ENCODE measurements at regions of chr19 and their contacts with region 1.

Region 1: DNA sequence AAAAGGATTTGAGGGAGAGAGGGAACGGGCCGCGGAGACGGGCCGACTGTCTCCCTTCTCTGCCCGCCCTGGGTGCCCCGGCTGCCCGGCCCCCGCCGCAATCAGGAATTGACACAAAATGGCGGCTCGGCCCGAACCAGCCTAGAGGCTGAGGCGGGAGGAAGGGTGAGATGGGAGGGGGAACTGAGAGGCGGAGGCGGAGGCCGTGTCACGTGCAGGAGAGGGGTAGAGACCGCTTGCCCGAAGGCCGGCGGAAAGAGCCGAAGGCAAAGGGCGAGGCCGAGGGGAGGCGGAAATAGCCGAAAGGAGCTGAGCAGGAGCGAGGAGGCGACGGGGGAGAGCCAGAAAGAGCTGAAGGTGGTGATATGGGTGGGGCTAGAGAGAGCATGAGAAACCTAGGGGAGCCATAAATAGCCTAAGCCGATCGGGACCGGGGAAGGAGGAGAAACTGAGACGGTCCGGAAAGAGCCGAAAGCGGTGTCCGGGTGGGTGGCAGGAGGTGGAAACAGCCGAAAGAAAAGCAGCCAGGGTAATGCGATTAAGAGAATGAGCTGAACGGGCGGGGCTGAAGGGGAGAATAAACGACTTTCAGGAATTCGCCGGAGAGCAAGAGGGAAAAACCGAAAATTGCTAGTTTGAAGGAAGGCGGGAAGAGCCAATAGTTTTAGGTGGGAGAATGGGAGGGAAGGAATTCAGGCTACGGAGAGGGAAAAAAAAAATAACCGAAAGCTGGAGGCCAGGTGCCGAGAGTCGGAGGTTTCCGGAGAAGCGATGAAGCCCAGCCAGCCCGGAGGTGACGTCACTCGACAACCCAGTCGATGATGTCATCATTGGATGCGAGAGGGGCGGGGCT is at the start of gene ZC3H4:
- DNase-seq: peak; percentile 95

Region 2: DNA sequence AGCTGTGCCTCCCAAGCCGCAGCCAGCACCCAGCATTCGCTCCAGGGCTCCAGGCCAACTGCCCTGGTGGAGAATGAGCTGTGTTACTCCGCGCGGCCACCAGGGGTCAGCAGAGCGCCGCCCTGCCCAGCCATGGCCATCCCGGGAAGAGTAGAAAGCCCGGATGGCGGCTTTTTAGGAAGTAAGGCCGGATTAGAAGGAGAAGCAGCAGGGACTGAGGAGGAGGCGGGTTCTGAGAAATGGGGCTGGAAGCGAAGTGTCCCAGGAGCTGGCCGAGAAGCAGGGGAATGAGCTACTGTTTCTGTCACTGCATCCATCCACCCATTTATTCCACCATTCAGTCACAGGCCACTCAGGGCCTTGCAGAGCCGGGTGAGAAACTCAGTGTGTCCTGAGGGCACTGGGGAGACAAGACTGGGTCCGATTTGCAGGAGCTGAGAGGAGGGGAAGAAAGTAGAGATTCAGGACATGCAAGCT is 100.1 kb before region 1 on chr19:
- CTCF ChIA-PET with region 1: interaction called, 4 read pairs
- POLR2A ChIA-PET with region 1: interaction called, 12 read pairs
- DNase-seq: peak; percentile 89

Region 3: DNA sequence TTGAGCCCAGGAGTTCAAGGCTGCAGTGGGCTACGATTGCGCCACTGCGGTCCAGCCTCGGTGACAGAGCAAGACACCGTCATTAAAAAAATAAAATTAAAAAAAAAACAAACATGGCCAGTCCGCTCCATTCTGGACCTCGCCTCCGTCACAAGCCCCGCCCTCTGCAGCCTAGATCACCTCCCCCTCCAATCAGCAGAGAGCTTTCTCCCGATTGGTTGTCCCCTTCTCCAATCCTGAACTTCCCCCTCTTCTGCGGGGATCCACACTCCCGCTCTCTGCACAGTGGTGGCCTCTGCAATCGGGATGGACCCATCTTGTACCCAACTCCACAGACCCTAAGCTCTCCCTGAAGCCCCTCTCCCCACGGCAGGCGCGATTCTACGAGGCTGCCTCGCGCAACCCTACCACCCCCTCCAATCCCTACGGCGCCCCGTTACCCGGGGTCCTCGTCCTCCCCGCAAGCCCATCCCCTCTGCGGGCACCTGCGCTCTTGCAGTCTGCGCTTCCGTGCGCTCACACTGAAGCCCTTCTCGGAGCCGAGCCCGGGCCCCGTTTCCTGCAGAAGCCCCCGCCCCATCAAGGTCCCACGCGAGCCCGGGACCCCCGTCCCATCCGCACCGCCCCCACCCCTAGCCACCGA is 65.3 kb before region 1 on chr19:
- CTCF ChIA-PET with region 1: no interaction called
- POLR2A ChIA-PET with region 1: interaction called, 14 read pairs
- DNase-seq: peak; percentile 93

Region 4: DNA sequence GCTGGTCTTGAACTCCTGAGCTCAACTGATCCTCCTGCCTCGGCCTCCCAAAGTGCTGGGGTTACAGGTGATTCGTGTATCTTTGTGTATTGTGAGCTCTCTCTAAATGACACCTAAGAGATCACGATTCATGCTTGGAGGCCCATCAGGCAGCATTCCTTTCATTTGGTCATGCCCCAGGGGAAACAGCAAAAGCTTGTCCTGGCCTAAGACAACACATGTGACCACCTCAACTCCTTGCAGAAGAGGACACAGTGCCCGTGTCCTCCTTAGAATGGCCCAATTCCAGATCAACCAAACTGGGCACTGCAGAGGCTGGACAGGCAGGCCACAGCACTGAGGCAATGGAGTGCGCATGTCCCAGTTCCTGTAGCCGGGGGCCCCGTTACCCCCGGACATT is 32.1 kb before region 1 on chr19:
- CTCF ChIA-PET with region 1: interaction called, 7 read pairs
- POLR2A ChIA-PET with region 1: interaction called, 26 read pairs
- DNase-seq: no peak

Region 5: DNA sequence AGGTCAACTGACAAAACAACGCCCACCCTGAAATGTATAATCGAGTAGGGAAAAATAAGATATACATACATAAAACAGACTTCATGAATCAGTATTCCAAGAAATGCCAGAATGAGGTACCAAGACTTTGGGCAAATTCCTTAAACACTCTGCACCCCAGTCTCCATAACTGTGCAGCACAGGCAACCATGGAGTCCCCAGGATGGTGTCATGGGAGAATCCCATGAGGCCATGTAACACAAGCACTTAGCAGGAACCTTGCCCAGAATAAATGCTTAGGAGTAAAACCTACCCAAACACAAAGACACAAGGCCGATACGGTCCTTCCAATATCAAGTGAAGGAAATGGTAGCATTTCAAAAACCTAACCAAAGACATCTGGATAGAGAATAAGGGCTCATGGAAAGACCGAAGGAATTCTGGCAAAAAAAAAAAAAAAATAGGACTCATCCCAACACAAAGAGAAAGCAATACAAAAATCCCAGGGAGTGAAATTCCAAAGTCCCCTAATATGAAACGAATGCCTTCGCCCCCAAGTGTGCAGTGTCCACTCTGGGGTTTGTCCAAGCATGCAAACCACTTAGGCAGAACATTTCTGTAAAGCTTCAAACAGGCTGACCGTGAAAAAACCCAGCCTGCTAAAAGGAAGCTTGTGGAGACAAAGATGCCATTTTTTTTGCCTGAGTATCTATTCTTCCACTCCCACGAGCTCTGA is 10.7 kb before region 1 on chr19:
- CTCF ChIA-PET with region 1: interaction called, 3 read pairs
- POLR2A ChIA-PET with region 1: interaction called, 28 read pairs
- DNase-seq: no peak

Region 6: DNA sequence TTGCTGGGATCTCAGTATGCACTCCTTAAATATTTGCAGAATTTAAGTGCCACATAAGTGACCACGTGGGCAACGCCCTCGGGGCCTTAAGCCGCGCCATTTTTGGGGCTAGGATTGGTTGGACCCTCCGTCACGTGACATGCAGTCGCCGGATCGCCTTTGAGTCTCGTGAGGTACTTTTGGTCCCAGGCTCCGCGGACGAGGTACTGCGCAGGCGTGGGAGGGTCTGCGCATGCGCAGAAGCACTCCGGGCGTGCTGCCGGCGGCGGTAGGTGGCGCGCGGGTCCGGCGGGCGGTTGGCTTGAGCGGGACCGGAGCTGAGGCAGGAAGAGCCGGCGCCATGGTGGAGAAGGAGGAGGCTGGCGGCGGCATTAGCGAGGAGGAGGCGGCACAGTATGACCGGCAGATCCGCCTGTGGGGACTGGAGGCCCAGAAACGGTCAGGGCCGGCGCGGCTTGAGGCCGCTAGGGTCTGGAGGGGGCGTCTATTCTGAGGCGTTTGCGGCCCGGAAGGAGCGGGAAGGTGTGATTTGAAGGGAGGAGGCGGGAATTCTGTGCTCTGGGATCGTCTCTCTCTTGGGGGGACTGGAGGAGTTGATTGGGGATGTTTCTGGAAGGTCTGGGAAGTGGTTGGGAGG is 17.5 kb after region 1 on chr19 and contains the start of gene SAE1:
- CTCF ChIA-PET with region 1: interaction called, 8 read pairs
- POLR2A ChIA-PET with region 1: interaction called, 35 read pairs
- DNase-seq: peak; percentile 99

Measured in HEK293T (cell line).